ENCODE measurements at regions of chr14 and their contacts with region 1.

Region 1: DNA sequence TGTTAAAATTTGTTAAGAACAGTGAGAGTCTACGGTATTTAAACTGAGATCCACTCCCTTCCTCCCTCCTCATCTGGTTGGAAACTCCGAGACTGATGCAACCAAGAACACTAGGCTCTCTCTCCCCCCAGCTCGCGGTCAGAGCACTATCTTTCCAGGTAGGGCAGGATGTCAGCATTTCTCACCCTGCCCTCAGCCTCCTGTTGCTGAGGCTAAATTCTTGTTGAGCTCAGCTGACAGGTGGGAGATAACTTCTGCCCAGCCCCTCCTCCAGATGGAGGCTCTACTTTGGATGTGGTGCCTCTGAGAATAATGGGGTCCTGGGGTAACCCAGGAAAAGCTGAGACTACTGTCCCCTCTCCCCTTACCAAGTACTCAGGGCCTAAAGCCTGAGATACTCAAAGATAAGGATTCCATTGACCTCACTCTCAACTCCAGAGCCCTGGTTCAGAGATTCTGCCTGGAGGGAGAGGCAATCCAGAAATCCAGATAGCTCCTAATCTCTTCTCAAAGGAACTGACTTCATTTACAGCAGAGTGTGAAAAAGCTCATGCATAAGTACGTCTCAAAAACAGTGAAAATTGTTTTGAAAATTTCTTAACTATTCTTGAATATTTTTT is 110.1 kb downstream of the EML5 start:
- ATAC-seq: no peak
- H3K4me3 ChIP-seq: no peak overlapping the region
- H3K27ac ChIP-seq: no peak overlapping the region
- H3K4me1 ChIP-seq: no peaks in the 10 kb centered on the region

Region 2: DNA sequence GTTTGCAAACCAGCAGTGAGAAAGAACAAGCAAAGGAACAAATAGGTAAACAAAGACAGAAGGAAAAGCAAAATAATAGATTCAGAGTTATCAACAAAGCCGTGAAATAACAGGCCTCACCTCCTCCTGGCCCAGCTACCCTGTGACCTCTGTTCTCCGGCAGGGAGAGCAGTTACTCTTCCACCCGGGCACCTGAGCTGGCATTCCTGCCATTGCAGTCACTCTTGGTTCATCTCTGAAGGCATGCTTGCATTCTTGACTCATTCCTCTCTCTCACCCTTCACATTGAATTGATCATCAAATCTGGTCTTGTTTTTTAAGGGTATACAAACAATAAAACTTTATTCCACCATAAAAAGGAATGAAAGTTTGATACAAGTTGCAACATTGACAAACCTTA is 236.9 kb after region 1 on chr14:
- in situ Hi-C with region 1: no loop called
- ATAC-seq: no peak
- H3K4me3 ChIP-seq: no peak overlapping the region
- H3K27ac ChIP-seq: no peak overlapping the region
- H3K4me1 ChIP-seq: no peaks in the 10 kb centered on the region

Region 3: GRCh38 chr14:89000007-89000942 is 317.7 kb after region 1 on chr14:
- in situ Hi-C with region 1: loop called in 1 of 9 experiments (anchors 25 kb)
- ATAC-seq: peak in 5 of 8 experiments; percentile 31 to 87 (median 80)
- H3K4me3 ChIP-seq: no peak overlapping the region
- H3K27ac ChIP-seq: no peak overlapping the region
- H3K4me1 ChIP-seq: no peaks in the 10 kb centered on the region

Measured in motor neuron (in vitro differentiated cells).